Body of pancreas (tissue), 4 donors: ENCODE measurements at regions of chr1 and their contacts with region 1.

Region 1: GRCh38 chr1:38834937-38835827 is 24.4 kb downstream of the RRAGC start:
- DNase-seq: peak; percentile 42 to 78 (median 54)
- ATAC-seq: peak; percentile 78
- H3K4me3 ChIP-seq: no peak overlapping the region
- H3K27ac ChIP-seq: no peak overlapping the region
- H3K4me1 ChIP-seq: no peaks in the 10 kb centered on the region
- H3K27me3 ChIP-seq: no peaks in the 10 kb centered on the region
- CTCF ChIP-seq: peak; percentile 39 to 82 (median 75)
- POLR2A ChIP-seq: no peak

Region 2: GRCh38 chr1:38029685-38030511 is 805.3 kb before region 1 on chr1:
- intact Hi-C with region 1: loop called (anchors 10 kb)
- DNase-seq: peak; percentile 53 to 83 (median 77)
- ATAC-seq: peak; percentile 70
- H3K4me3 ChIP-seq: no peak overlapping the region
- H3K27ac ChIP-seq: peak overlapping the region; percentile 52 to 79 (median 64)
- H3K4me1 ChIP-seq: peaks cover 31% of the 10 kb centered on the region
- H3K27me3 ChIP-seq: no peaks in the 10 kb centered on the region
- CTCF ChIP-seq: no peak
- POLR2A ChIP-seq: peak in 1 of 3 donors; percentile 10

Region 3: DNA sequence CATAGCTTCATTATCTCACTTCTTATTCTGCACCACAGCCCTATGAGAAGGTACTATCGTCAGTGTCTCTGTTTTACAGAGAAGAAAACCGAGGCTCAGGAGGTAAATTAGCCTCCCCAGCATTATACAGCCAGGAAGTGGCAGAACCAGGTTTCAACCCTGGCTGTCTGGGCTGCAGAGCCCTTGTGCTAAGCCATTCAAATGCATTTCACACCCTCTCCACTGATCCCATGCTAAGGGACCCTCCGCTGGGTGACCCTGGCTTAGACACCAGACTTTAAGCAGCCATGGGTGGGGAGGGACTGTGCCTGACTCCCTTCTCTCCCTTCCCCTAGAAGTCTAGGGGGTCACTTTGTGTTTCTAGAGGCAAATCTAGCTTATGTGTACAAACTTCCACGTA is 63.2 kb before region 1 on chr1:
- intact Hi-C with region 1: no loop called
- DNase-seq: no peak
- ATAC-seq: no peak
- H3K4me3 ChIP-seq: no peak overlapping the region
- H3K27ac ChIP-seq: no peak overlapping the region
- H3K4me1 ChIP-seq: no peaks in the 10 kb centered on the region
- H3K27me3 ChIP-seq: no peaks in the 10 kb centered on the region
- CTCF ChIP-seq: no peak
- POLR2A ChIP-seq: no peak